Caco-2 (cell line): ENCODE measurements at regions of chr10 and their contacts with region 1.

Region 1: DNA sequence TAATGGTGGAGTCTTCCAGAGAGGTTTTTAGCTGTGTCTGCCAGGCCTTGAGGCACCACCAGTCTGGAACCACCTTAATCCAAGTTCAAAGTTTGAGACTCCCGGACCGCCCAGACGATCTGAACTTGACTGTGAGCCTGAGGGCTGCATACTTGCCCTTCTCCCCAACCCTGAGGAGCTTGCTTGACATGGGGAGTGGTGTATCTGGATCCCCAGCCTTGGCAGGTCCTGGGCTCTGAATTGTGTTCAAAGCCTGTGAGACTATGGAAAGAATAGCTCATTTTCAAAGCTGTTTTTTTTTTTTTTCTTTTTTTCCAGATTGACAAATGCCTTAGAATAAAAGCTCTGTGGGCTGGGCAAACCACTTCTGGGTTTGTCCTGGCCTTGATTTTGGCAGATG is 22.3 kb upstream of the CAMK1D start:
- DNase-seq: no peak
- H3K4me3 ChIP-seq: no peak overlapping the region
- H3K4me3 Mint-ChIP-seq: no peak overlapping the region
- H3K27ac Mint-ChIP-seq: no peak overlapping the region
- H3K4me1 ChIP-seq: no peaks in the 10 kb centered on the region
- H3K4me1 Mint-ChIP-seq: no peaks in the 10 kb centered on the region
- H3K27me3 ChIP-seq: no peaks in the 10 kb centered on the region
- H3K27me3 Mint-ChIP-seq: no peaks in the 10 kb centered on the region
- CTCF ChIP-seq: no peak

Region 2: GRCh38 chr10:12279281-12279680 is 47.8 kb before region 1 on chr10:
- CTCF ChIA-PET with region 1: interaction called, 10 read pairs
- POLR2A ChIA-PET with region 1: no interaction called
- intact Hi-C with region 1: no loop called
- DNase-seq: no peak
- H3K4me3 ChIP-seq: no peak overlapping the region
- H3K4me3 Mint-ChIP-seq: no peak overlapping the region
- H3K27ac Mint-ChIP-seq: no peak overlapping the region
- H3K4me1 ChIP-seq: no peaks in the 10 kb centered on the region
- H3K4me1 Mint-ChIP-seq: no peaks in the 10 kb centered on the region
- H3K27me3 ChIP-seq: no peaks in the 10 kb centered on the region
- H3K27me3 Mint-ChIP-seq: no peaks in the 10 kb centered on the region
- CTCF ChIP-seq: no peak

Region 3: DNA sequence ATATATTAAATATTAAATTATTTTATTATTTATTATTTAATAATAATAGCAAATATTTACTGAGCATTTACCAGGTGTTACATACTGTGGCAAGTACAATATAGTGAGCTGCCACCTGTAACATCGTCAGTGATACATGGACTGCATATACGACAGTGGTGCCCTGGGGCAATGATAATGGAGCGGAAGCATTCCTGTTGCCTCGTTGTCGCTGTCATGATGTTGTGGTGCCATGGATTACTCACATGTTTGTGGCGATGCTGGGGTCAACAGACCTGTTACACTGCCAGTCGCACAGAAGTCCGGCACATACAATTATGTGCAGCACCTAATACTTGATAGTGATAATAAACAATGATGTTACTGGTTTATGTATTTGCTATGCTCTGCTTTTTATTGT is 42.9 kb after region 1 on chr10:
- CTCF ChIA-PET with region 1: no interaction called
- POLR2A ChIA-PET with region 1: no interaction called
- intact Hi-C with region 1: no loop called
- DNase-seq: no peak
- H3K4me3 ChIP-seq: no peak overlapping the region
- H3K4me3 Mint-ChIP-seq: no peak overlapping the region
- H3K27ac Mint-ChIP-seq: no peak overlapping the region
- H3K4me1 ChIP-seq: no peaks in the 10 kb centered on the region
- H3K4me1 Mint-ChIP-seq: no peaks in the 10 kb centered on the region
- H3K27me3 ChIP-seq: no peaks in the 10 kb centered on the region
- H3K27me3 Mint-ChIP-seq: no peaks in the 10 kb centered on the region
- CTCF ChIP-seq: no peak

Region 4: GRCh38 chr10:13074561-13075451 is 747.7 kb after region 1 on chr10:
- CTCF ChIA-PET with region 1: no interaction called
- POLR2A ChIA-PET with region 1: no interaction called
- intact Hi-C with region 1: no loop called
- DNase-seq: peak; percentile 74 to 87
- H3K4me3 ChIP-seq: no peak overlapping the region
- H3K4me3 Mint-ChIP-seq: no peak overlapping the region
- H3K27ac Mint-ChIP-seq: no peak overlapping the region
- H3K4me1 ChIP-seq: no peaks in the 10 kb centered on the region
- H3K4me1 Mint-ChIP-seq: no peaks in the 10 kb centered on the region
- H3K27me3 ChIP-seq: no peaks in the 10 kb centered on the region
- H3K27me3 Mint-ChIP-seq: peaks cover 2% of the 10 kb centered on the region
- CTCF ChIP-seq: peak; percentile 95 to 97